ENCODE measurements at regions of chr4 and their contacts with region 1.

Region 1: GRCh38 chr4:140693562-140693961 is 62.6 kb downstream of the TBC1D9 start:
- DNase-seq: no peak
- H3K4me3 ChIP-seq: no peak overlapping the region
- H3K27ac ChIP-seq: no peak overlapping the region
- H3K4me1 ChIP-seq: peaks cover 12% of the 10 kb centered on the region
- H3K27me3 ChIP-seq: no peaks in the 10 kb centered on the region
- CTCF ChIP-seq: no peak
- EP300 ChIP-seq: no peak
- POLR2A ChIP-seq: no peak

Region 2: GRCh38 chr4:140485939-140486338 is 207.6 kb before region 1 on chr4:
- intact Hi-C with region 1: loop called in 1 of 4 experiments (anchors 2 kb)
- DNase-seq: no peak
- H3K4me3 ChIP-seq: no peak overlapping the region
- H3K27ac ChIP-seq: no peak overlapping the region
- H3K4me1 ChIP-seq: no peaks in the 10 kb centered on the region
- H3K27me3 ChIP-seq: no peaks in the 10 kb centered on the region
- CTCF ChIP-seq: no peak
- EP300 ChIP-seq: no peak
- POLR2A ChIP-seq: no peak

Measured in ovary (tissue), 10 donors.